WTC11 (cell line): ENCODE measurements at regions of chr15 and their contacts with region 1.

Region 1: DNA sequence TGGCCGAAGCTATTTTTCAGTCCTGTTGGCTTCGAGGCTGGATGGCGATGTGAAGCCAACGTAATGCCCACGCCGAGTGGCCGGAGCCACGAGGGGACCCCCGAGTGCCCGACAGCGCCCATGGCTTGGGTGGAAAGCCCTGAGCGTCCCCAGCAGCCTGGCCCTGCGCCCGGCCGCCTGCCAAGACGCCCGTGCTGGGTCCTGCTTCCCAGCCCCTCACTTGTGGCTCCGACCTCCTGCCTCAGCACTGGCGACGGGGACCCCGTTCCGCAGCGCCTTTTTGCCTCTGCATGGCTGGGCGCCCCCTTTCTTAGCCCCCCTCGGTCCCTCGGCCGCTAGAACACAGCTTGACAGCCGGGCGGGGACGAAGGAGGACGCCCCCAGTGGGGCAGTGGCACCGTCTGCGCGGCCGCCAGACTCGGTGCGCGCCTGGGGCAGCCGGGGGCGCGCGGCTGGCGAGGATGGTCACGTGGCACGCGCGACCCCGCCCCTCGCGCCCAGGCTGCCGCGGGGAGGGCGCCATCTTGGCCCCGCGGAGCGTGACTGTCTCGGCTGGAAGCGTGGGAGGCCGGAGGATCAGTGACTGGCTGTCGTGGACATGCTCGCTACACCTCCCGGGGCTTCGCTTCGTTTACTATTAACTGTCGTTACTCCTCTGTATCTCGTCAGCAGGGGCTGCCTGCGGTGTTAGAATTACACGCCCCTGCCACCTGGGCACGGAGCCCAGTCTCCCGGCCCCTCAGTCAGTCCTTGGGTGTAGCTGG is 626 bp upstream of the GPR176 start:
- DNase-seq: peak; percentile 65
- ATAC-seq: peak; percentile 65
- H3K4me3 Mint-ChIP-seq: peak overlapping the region; percentile 85
- H3K27ac Mint-ChIP-seq: peak overlapping the region; percentile 8
- H3K4me1 Mint-ChIP-seq: peaks cover 59% of the 10 kb centered on the region
- H3K27me3 Mint-ChIP-seq: no peaks in the 10 kb centered on the region
- CTCF ChIP-seq: no peak

Region 2: DNA sequence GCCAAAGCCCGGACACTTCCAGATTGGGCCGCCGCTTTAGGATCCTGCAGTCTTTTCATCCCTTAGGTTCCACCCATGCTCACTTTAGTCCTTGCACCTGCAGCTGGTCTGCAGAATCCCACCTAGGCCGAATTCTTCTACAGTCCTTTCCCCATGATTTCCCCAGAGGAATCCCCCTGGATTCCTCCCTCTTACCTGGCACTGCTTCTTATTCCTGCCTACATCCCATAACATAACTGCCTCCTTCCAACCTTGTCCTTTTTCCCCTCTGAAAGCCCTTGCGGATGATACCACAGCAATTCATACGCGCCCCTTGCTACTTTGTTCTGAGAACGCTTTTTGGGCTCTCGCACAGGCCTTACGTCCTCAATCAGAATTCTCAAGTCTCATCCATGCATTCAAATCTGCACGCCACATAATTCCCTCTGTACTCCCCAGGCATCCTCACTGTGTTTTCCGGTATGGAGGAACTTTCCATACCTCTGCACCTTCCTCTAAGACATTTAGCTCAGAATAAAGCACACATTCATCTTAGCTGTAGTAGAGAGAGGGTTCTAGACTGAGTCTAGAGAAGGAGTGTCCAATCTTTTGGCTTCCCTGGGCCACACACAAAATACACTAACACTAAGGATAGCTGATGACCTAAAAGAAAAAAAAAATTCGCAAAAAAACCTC is 13.8 kb after region 1 on chr15:
- CTCF ChIA-PET with region 1: interaction called, 6 read pairs
- POLR2A ChIA-PET with region 1: interaction called, 16 read pairs
- DNase-seq: no peak
- ATAC-seq: peak; percentile 1; the same call in 1 of the 2 replicates
- H3K4me3 Mint-ChIP-seq: peak overlapping the region; percentile 89
- H3K27ac Mint-ChIP-seq: peak overlapping the region; percentile 78
- H3K4me1 Mint-ChIP-seq: peaks cover 52% of the 10 kb centered on the region
- H3K27me3 Mint-ChIP-seq: no peaks in the 10 kb centered on the region
- CTCF ChIP-seq: no peak